Activated naive CD4-positive, alpha-beta T cell treated with anti-CD3 and anti-CD28 coated beads for 36 hours (primary cell): ENCODE measurements at regions of chr6 and their contacts with region 1.

Region 1: DNA sequence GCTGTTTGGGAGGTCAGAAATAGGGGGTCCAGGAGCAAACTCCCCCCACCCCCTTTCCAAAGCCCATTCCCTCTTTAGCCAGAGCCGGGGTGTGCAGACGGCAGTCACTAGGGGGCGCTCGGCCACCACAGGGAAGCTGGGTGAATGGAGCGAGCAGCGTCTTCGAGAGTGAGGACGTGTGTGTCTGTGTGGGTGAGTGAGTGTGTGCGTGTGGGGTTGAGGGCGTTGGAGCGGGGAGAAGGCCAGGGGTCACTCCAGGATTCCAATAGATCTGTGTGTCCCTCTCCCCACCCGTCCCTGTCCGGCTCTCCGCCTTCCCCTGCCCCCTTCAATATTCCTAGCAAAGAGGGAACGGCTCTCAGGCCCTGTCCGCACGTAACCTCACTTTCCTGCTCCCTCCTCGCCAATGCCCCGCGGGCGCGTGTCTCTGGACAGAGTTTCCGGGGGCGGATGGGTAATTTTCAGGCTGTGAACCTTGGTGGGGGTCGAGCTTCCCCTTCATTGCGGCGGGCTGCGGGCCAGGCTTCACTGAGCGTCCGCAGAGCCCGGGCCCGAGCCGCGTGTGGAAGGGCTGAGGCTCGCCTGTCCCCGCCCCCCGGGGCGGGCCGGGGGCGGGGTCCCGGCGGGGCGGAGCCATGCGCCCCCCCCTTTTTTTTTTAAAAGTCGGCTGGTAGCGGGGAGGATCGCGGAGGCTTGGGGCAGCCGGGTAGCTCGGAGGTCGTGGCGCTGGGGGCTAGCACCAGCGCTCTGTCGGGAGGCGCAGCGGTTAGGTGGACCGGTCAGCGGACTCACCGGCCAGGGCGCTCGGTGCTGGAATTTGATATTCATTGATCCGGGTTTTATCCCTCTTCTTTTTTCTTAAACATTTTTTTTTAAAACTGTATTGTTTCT is at the start of gene VEGFA:
- DNase-seq: peak; percentile 93
- H3K4me3 Mint-ChIP-seq: peak within 1 kb of the TSS; percentile 97
- H3K27ac Mint-ChIP-seq: peak within 1 kb of the TSS; percentile 83
- H3K4me1 Mint-ChIP-seq: peaks cover 19% of the 10 kb centered on the region
- H3K27me3 Mint-ChIP-seq: no peaks in the 10 kb centered on the region
- total RNA-seq, gene VEGFA: 35.9 to 37.3 TPM

Region 2: DNA sequence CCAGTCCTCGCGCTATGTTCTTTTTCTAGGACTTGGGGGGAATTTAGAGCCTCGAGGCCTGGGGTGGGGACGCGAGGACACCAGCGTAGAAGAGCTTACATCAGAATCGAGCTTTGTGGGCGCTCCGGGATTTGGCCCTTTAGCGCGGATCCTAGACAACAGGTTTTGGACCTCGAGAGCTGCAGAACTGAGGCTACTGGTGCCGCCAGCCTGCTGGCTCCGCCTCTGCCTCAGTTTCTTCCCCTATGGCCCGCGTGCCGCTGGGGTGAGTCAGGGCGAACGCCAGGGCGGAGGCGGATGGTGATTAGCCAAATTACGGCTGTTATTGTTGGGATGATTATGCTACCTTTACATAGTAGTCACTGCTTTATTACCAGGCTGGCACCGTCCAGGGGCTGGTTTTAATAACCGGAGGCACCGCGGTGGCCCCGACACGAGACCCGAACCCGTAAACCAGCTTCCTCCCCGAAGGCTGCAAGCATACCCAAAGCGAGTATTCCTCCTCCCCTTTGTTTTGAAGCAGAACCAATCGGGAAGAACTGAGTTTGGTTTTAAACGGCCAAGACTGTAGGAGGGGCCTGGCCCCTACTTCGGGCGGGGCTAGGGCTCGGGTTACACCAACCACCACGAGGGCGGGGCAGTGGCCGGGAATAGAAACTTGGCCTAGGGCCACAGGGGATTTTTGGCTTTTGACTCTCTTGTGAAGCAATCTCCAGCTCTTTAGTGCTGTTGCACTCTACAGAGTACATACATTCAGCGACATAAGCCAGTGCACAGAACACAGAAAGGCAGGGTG is 140.1 kb before region 1 on chr6:
- CTCF ChIA-PET with region 1: no interaction called
- intact Hi-C with region 1: loop called (anchors 2 kb)
- DNase-seq: peak; percentile 98
- H3K4me3 Mint-ChIP-seq: peak overlapping the region; percentile 98
- H3K27ac Mint-ChIP-seq: peak overlapping the region; percentile 99
- H3K4me1 Mint-ChIP-seq: peaks cover 33% of the 10 kb centered on the region
- H3K27me3 Mint-ChIP-seq: no peaks in the 10 kb centered on the region

Region 3: DNA sequence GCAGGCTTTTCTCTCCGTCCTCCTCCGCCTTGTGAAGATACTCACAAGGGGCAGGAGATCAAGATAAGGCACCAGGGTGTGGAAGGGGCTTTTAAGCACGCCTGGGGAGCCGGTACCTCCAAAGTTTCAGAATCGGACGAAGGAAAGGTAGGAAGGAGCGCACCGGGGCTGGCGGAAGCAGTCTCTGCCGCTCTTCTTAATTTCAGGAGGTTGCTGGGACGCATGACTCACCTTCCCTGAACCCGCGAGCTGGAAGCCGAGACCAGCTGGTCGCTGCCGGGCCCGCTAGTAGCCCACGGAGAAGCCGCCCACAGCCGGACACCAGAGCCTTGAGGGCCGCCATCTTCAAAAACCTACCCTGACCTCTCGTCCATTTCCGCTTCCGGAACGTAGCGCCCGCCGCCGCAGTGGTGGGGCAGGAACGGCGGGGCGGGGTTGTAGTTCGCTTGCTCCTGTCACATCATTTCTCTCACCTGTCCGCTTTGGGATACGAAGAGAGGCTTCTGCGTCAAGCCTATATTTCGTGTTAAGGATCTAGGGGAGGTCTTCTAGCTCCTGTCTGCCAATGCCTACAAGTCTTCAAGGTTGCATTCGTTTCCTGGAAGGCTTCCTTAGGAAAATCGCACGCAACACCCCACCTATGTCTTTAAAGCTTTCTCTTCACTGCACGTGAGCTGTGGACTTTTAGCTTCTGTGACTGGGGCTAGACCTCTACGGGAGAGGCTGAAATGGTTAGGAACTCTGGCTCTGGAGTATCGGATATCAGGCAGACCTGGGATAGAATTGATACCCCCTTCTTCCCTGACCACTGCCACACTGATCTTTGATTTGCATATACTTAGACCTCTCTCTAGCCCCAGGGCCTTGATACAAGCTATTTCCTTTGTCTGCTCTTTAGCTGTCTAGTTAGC is 82.1 kb before region 1 on chr6 and contains the start of gene MRPS18A:
- CTCF ChIA-PET with region 1: interaction called, 4 read pairs
- intact Hi-C with region 1: loop called (anchors 1 kb)
- DNase-seq: peak; percentile 90
- H3K4me3 Mint-ChIP-seq: peak within 1 kb of the TSS; percentile 92
- H3K27ac Mint-ChIP-seq: peak within 1 kb of the TSS; percentile 81
- H3K4me1 Mint-ChIP-seq: peaks cover 42% of the 10 kb centered on the region
- H3K27me3 Mint-ChIP-seq: peaks cover 3% of the 10 kb centered on the region
- total RNA-seq, gene MRPS18A: 47.8 to 50.2 TPM

Region 4: GRCh38 chr6:43733471-43734293 is 36.1 kb before region 1 on chr6:
- CTCF ChIA-PET with region 1: interaction called, 10 read pairs
- intact Hi-C with region 1: loop called (anchors 2 kb)
- DNase-seq: peak; percentile 87
- H3K4me3 Mint-ChIP-seq: no peak overlapping the region
- H3K27ac Mint-ChIP-seq: peak overlapping the region; percentile 83
- H3K4me1 Mint-ChIP-seq: peaks cover 21% of the 10 kb centered on the region
- H3K27me3 Mint-ChIP-seq: no peaks in the 10 kb centered on the region

Region 5: DNA sequence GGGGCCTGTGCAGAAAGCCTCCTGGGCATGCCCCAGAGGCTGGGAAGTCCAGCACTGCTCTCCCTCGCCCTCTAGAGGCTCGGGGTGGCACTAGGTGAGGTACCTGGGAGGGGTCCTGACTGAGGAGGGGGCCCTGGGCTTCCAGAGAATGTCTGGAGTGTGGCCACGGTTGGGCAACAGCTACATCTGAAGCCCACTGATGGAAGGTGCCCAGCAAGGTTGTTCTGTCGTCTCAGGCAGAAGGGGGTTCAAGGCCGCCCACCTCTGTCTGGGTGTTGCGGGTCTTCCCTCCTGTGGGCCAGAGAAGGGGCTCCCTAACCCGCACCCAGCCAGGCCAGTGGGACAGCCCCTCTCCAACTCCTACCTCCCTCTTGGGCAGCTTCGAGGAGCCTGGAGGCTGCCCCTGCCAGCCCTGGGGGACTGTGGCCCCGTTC is 11.1 kb before region 1 on chr6:
- CTCF ChIA-PET with region 1: interaction called, 16 read pairs
- intact Hi-C with region 1: no loop called
- DNase-seq: peak; percentile 62
- H3K4me3 Mint-ChIP-seq: no peak overlapping the region
- H3K27ac Mint-ChIP-seq: no peak overlapping the region
- H3K4me1 Mint-ChIP-seq: peaks cover 3% of the 10 kb centered on the region
- H3K27me3 Mint-ChIP-seq: no peaks in the 10 kb centered on the region

Region 6: DNA sequence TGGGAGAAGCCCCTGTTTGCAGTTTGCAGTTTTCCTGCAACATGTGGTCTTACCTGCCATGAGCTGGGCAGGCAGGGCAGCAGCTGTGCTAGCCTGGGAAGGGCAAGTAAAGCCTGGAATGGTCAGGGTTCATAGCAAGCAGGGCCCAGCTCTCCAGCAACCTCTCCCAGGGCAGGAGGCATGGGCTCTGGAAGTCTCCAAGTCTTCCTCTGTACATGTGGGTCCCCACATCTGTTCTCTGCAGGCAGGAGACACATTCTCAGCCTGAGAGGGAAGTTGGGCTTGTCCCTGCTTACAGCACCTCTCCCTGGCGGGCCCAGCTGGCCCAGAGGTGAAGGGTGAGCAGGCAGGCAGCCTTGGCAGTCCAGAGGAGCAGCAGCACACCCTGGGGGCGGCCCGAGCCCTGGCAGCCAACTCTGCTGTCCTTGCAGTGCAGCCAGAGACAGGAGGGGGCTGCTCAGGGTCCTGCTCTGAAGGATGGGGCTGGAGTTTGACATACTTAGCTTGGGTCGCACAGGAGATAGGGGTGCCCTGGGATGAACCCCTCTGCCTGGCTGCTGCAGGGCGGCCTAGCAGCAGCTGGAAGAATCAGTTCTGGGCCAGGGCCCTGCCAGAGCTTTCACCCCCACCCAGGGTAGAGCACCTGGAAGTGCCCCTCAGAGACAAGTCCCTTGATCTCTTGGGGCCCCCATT is 181.4 kb after region 1 on chr6:
- CTCF ChIA-PET with region 1: no interaction called
- intact Hi-C with region 1: loop called (anchors 1 kb)
- DNase-seq: peak; percentile 28
- H3K4me3 Mint-ChIP-seq: no peak overlapping the region
- H3K27ac Mint-ChIP-seq: no peak overlapping the region
- H3K4me1 Mint-ChIP-seq: no peaks in the 10 kb centered on the region
- H3K27me3 Mint-ChIP-seq: peaks cover 4% of the 10 kb centered on the region

Region 7: GRCh38 chr6:44074439-44075136 is 304.8 kb after region 1 on chr6:
- CTCF ChIA-PET with region 1: interaction called, 45 read pairs
- intact Hi-C with region 1: loop called (anchors 1 kb)
- DNase-seq: peak; percentile 73
- H3K4me3 Mint-ChIP-seq: peak overlapping the region; percentile 73
- H3K27ac Mint-ChIP-seq: no peak overlapping the region
- H3K4me1 Mint-ChIP-seq: peaks cover 19% of the 10 kb centered on the region
- H3K27me3 Mint-ChIP-seq: peaks cover 3% of the 10 kb centered on the region